Right lobe of liver (tissue), 6 donors: ENCODE measurements at regions of chr15 and their contacts with region 1.

Region 1: DNA sequence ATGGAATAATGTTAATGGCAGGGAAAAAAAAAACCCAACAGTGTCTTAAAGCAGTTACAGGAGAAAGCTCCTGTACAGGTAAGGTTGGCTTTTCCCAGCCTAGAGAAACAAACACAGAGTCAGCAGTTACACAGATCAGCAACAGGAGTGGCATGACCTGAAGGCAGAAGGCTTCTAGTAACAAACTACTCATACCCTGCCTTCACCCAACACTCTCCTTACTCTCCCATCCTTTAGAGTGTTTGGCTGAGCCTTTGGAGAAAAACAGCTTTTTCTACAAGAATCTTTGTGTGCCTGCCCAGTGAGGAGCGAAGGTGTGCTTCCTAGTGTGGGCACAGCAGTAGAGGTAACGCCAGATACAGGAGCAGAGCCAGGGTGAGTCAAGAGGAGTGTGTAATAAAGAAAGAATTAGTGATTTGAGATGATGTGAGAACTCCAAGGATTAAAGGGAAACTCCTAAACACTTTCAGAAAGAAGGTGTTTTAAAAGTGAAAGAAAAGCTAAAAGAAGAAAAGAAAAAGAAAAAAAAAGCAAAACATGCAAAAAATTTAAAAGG is 152.7 kb downstream of the POLR2M start:
- DNase-seq: no peak
- ATAC-seq: no peak
- H3K4me3 ChIP-seq: no peak overlapping the region
- H3K27ac ChIP-seq: no peak overlapping the region
- H3K4me1 ChIP-seq: no peaks in the 10 kb centered on the region
- H3K27me3 ChIP-seq: no peaks in the 10 kb centered on the region
- CTCF ChIP-seq: no peak
- POLR2A ChIP-seq: no peak

Region 2: GRCh38 chr15:57635300-57635909 is 223.8 kb before region 1 on chr15:
- intact Hi-C with region 1: no loop called
- DNase-seq: no peak
- ATAC-seq: peak in 1 of 4 donors; percentile 30
- H3K4me3 ChIP-seq: no peak overlapping the region
- H3K27ac ChIP-seq: no peak overlapping the region
- H3K4me1 ChIP-seq: no peaks in the 10 kb centered on the region
- H3K27me3 ChIP-seq: no peaks in the 10 kb centered on the region
- CTCF ChIP-seq: no peak
- POLR2A ChIP-seq: no peak

Region 3: DNA sequence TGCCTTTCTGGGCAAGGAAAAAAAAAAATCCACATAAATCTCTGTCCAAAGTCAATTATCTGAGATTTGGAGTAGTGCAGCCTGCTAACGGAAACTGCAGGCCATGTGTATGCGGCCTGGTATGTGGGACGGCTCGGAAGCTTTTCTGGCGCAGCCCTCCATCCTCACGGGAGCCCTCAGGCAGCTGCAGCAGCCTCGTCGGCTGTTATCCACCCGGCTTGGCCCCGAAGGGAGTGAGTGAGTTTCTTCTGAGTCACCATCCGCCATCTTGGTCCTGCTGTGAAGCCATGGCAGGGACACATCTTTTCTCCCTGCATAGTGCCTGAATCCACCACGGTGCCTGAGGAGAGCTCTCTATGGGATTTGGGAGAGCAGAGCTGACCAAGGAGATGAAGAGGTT is 89.9 kb before region 1 on chr15:
- intact Hi-C with region 1: loop called in 1 of 2 experiments (anchors 10 kb)
- DNase-seq: no peak
- ATAC-seq: peak in 2 of 4 donors; percentile 46 to 49
- H3K4me3 ChIP-seq: no peak overlapping the region
- H3K27ac ChIP-seq: no peak overlapping the region
- H3K4me1 ChIP-seq: no peaks in the 10 kb centered on the region
- H3K27me3 ChIP-seq: no peaks in the 10 kb centered on the region
- CTCF ChIP-seq: no peak
- POLR2A ChIP-seq: no peak